ENCODE measurements at regions of chr6 and their contacts with region 1.

Region 1: DNA sequence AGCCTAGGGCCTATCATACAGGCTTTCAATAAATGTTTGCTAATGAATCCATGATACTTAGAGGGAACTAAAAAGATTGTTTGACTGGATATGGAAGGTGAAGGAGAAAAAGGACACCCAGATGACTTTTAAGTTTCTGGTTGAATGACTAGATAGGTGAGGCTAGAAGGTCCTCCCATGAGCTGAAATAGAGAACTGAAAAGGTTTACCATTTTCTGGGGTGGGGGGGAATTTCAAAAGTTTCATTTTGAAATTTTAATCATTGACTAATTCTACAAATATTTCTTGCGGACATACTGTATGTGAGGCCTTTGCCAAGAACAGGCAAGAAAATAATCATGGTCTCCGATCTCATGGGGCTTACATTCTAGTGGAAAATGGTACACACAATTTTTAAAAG is 17.9 kb upstream of the ZBTB2 start:
- DNase-seq: no peak
- ATAC-seq: peak; percentile 82
- H3K4me3 ChIP-seq: no peak overlapping the region
- H3K27ac ChIP-seq: no peak overlapping the region; the same call in 1 of the 2 replicates
- H3K4me1 ChIP-seq: peaks cover 6% of the 10 kb centered on the region
- H3K27me3 ChIP-seq: no peaks in the 10 kb centered on the region
- CTCF ChIP-seq: no peak
- EP300 ChIP-seq: no peak
- POLR2A ChIP-seq: no peak
- RAD21 ChIP-seq: no peak

Region 2: DNA sequence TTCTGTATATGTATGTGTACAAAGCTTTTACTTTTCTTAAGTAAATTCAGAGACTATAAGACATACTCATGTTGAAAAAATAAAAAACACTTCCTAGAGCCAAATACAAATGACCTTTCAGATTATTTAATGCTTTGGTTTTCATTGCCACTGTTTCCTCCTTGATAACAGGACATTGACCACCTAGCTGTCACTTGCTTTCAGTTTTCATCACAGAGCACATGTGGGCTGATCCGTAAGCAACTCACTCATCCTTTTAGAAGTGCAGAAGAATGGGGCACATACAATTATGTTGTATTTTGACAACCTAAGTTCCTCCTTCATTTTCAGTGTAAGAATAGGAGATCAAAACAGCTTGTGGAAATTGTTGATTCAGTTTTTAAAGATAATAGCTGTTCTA is 24.1 kb before region 1 on chr6:
- CTCF ChIA-PET with region 1: interaction called, 10 read pairs
- POLR2A ChIA-PET with region 1: interaction called, 3 read pairs
- RAD21 ChIA-PET with region 1: interaction called, 3 read pairs
- SMC1A ChIA-PET with region 1: no interaction called
- in situ Hi-C with region 1: no loop called
- intact Hi-C with region 1: no loop called
- DNase-seq: no peak
- ATAC-seq: peak; percentile 39
- H3K4me3 ChIP-seq: no peak overlapping the region
- H3K27ac ChIP-seq: peak overlapping the region; percentile 7
- H3K4me1 ChIP-seq: peaks cover 31% of the 10 kb centered on the region
- H3K27me3 ChIP-seq: no peaks in the 10 kb centered on the region
- CTCF ChIP-seq: no peak
- EP300 ChIP-seq: no peak
- POLR2A ChIP-seq: no peak
- RAD21 ChIP-seq: no peak

Region 3: GRCh38 chr6:151390276-151391032 is 18.8 kb before region 1 on chr6:
- CTCF ChIA-PET with region 1: interaction called, 63 read pairs
- POLR2A ChIA-PET with region 1: interaction called, 3 read pairs
- RAD21 ChIA-PET with region 1: interaction called, 3 read pairs
- SMC1A ChIA-PET with region 1: interaction called, 5 read pairs
- in situ Hi-C with region 1: no loop called
- intact Hi-C with region 1: no loop called
- DNase-seq: peak; percentile 94
- ATAC-seq: peak; percentile 87
- H3K4me3 ChIP-seq: peak overlapping the region; percentile 82; the same call in 1 of the 2 replicates
- H3K27ac ChIP-seq: peak overlapping the region; percentile 95
- H3K4me1 ChIP-seq: peaks cover 29% of the 10 kb centered on the region
- H3K27me3 ChIP-seq: no peaks in the 10 kb centered on the region
- CTCF ChIP-seq: no peak
- EP300 ChIP-seq: no peak
- POLR2A ChIP-seq: peak; percentile 88
- RAD21 ChIP-seq: no peak

Region 4: GRCh38 chr6:151434369-151434768 is 25.1 kb after region 1 on chr6:
- CTCF ChIA-PET with region 1: interaction called, 76 read pairs
- POLR2A ChIA-PET with region 1: no interaction called
- RAD21 ChIA-PET with region 1: no interaction called
- SMC1A ChIA-PET with region 1: interaction called, 7 read pairs
- in situ Hi-C with region 1: no loop called
- intact Hi-C with region 1: no loop called
- DNase-seq: no peak
- ATAC-seq: peak; percentile 43
- H3K4me3 ChIP-seq: no peak overlapping the region
- H3K27ac ChIP-seq: no peak overlapping the region
- H3K4me1 ChIP-seq: no peaks in the 10 kb centered on the region
- H3K27me3 ChIP-seq: no peaks in the 10 kb centered on the region
- CTCF ChIP-seq: no peak
- EP300 ChIP-seq: no peak
- POLR2A ChIP-seq: no peak
- RAD21 ChIP-seq: no peak

Region 5: GRCh38 chr6:151440930-151441329 is 31.7 kb after region 1 on chr6:
- CTCF ChIA-PET with region 1: interaction called, 76 read pairs
- POLR2A ChIA-PET with region 1: no interaction called
- RAD21 ChIA-PET with region 1: interaction called, 6 read pairs
- SMC1A ChIA-PET with region 1: interaction called, 7 read pairs
- in situ Hi-C with region 1: no loop called
- intact Hi-C with region 1: no loop called
- DNase-seq: no peak
- ATAC-seq: peak; percentile 65
- H3K4me3 ChIP-seq: peak overlapping the region; percentile 32; the same call in 1 of the 2 replicates
- H3K27ac ChIP-seq: peak overlapping the region; percentile 61
- H3K4me1 ChIP-seq: peaks cover 13% of the 10 kb centered on the region
- H3K27me3 ChIP-seq: no peaks in the 10 kb centered on the region
- CTCF ChIP-seq: peak; percentile 24 to 50 (median 49); a peak in 5 of 6 replicates
- EP300 ChIP-seq: no peak
- POLR2A ChIP-seq: no peak
- RAD21 ChIP-seq: peak; percentile 67

Region 6: GRCh38 chr6:151475653-151476523 is 66.6 kb after region 1 on chr6:
- CTCF ChIA-PET with region 1: interaction called, 17 read pairs
- POLR2A ChIA-PET with region 1: no interaction called
- RAD21 ChIA-PET with region 1: no interaction called
- SMC1A ChIA-PET with region 1: interaction called, 4 read pairs
- in situ Hi-C with region 1: no loop called
- intact Hi-C with region 1: loop called (anchors 1 kb)
- DNase-seq: no peak
- ATAC-seq: peak; percentile 96
- H3K4me3 ChIP-seq: 0 out of 2 replicates have a peak overlapping the region, but pooled peaks have one; percentile 7
- H3K27ac ChIP-seq: no peak overlapping the region
- H3K4me1 ChIP-seq: no peaks in the 10 kb centered on the region
- H3K27me3 ChIP-seq: no peaks in the 10 kb centered on the region
- CTCF ChIP-seq: peak; percentile 58 to 72 (median 71); a peak in 5 of 6 replicates
- EP300 ChIP-seq: no peak
- POLR2A ChIP-seq: no peak
- RAD21 ChIP-seq: peak; percentile 63

Region 7: GRCh38 chr6:151524059-151524458 is 114.8 kb after region 1 on chr6:
- CTCF ChIA-PET with region 1: no interaction called
- POLR2A ChIA-PET with region 1: no interaction called
- RAD21 ChIA-PET with region 1: no interaction called
- SMC1A ChIA-PET with region 1: no interaction called
- in situ Hi-C with region 1: no loop called
- intact Hi-C with region 1: no loop called
- DNase-seq: no peak
- ATAC-seq: no peak
- H3K4me3 ChIP-seq: no peak overlapping the region
- H3K27ac ChIP-seq: no peak overlapping the region
- H3K4me1 ChIP-seq: no peaks in the 10 kb centered on the region
- H3K27me3 ChIP-seq: no peaks in the 10 kb centered on the region
- CTCF ChIP-seq: no peak
- EP300 ChIP-seq: no peak
- POLR2A ChIP-seq: no peak
- RAD21 ChIP-seq: no peak